ENCODE measurements at regions of chr17 and their contacts with region 1.

Region 1: GRCh38 chr17:21363776-21364642 is 12.1 kb upstream of the KCNJ12 start:
- DNase-seq: no peak

Region 2: DNA sequence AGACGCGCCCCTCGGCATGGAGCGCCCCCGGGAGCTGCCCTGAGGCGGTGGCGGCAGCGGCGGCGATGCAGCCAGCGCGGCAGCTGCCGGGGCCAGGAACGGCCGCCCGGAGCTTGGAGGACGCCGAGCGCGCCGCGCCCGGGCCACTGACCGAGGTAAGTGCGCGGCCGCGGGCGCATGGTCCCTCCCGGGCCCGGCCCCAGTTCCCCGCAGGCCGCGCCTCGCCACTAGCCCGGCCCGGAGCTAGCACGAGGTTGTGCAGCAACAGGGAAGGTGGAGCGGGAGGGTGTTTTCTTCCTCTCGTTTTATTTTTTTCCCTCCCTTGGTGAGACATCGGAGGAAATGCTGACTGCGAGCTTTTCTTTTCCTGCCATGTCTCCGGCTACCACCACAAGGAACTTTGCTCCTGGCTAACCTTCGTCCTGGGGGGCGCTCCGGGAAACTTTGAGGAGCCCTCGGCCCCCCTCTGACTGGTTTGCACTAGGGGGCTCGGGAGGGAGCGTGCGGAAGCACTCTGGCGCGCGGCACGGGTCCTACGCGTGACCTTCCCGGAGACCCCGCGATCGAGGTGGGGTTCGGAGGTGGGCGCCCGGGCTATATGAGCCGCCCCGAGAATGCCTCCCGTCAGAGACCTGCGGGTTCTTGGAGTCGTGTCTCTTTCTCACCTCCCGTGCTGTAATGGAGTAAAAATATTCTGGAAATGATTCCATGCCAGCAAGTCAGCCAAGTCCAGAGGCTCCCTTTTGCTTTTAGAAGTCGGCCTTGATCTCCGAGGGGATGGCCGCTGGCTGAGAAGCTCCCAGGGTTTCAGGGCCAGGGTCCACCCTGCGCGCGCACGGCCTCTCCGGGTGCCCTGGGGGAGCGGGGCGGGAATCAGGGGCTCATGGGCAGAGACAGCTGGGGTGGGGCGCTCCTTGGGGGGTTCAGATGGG is 13.0 kb after region 1 on chr17:
- intact Hi-C with region 1: no loop called
- DNase-seq: no peak

Region 3: DNA sequence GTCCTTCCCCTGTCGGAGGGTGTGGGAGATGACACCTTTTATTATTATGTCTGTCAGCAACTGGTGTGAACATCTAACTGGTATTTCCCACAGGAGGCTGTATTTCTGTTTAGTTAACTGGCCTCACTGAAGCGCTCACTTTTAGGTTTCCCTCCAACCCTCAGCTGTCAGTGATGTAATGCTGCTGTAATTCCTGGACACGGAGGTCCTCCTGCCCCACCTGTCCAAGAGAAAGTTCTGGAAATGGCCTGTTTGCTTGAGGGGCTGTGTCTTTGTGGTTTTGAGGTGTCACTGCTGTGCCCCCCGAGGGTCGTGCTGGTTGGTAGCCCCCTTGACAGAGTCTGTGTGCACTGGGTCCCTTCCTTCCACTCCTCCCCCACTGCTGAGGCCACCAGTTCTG is 23.6 kb after region 1 on chr17:
- intact Hi-C with region 1: loop called in 1 of 2 experiments (anchors 1 kb)
- DNase-seq: no peak

Measured in posterior vena cava (tissue), 2 donors.